ENCODE measurements at regions of chr10 and their contacts with region 1.

Region 1: GRCh38 chr10:68301790-68302502 is 29.9 kb upstream of the HNRNPH3 start:
- DNase-seq: no peak
- ATAC-seq: peak in 3 of 4 donors; percentile 65 to 80 (median 72)
- H3K4me3 ChIP-seq: no peak overlapping the region
- H3K27ac ChIP-seq: no peak overlapping the region
- H3K4me1 ChIP-seq: peaks cover 0 to 6% (median 1%) of the 10 kb centered on the region in 12 donors
- H3K27me3 ChIP-seq: no peaks in the 10 kb centered on the region
- CTCF ChIP-seq: peak; percentile 46 to 69 (median 53)
- POLR2A ChIP-seq: no peak

Region 2: GRCh38 chr10:67849331-67850011 is 452.5 kb before region 1 on chr10:
- intact Hi-C with region 1: loop called in 4 of 10 experiments (anchors 10 kb)
- DNase-seq: peak; percentile 95 to 98 (median 96)
- ATAC-seq: peak; percentile 98 to 99 (median 99)
- H3K4me3 ChIP-seq: peak overlapping the region; percentile 55 to 99 (median 80)
- H3K27ac ChIP-seq: peak overlapping the region; percentile 89 to 99 (median 95)
- H3K4me1 ChIP-seq: peaks cover 0 to 8% (median 5%) of the 10 kb centered on the region in 12 donors
- H3K27me3 ChIP-seq: no peaks in the 10 kb centered on the region
- CTCF ChIP-seq: peak in 1 of 12 donors; percentile 34
- POLR2A ChIP-seq: peak in 1 of 2 donors; percentile 53

Region 3: DNA sequence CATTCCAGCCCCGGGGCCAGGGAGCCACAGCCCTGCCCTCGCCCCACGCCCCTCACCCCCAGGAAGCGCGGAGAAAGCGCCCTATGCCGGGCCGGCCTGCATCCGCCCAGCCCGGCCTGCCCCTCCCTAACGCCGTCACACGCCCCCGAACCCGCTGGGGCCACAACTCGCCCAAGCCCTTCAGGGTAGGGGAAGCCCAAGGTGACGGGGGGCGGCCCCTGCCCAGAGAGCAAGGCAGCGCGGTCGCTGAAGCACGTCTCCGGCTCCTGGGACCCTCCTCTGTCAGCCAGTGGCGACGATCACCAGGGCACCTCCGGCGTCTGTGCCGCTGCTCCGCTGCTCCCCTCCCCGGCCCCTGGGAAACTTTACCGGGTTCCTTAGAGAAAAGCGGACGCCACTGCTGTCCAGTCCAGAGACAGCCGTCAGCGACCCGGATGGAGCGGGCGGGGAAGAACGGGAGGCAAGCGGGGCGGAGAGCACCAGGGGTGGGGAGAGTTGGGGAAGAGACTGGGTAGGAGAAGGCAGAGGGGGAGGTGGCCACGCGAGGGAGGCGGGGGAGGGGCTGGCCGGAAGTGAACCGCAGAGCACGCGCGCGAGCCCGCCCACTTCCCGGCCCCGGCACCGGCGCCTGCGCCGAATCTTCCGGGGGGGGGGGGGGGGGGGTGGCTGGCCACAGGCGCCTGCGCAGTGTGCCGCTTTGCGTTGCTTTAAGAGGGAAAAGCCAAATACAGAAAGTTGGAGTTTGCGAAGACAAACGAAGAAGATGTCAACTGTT is 227.0 kb before region 1 on chr10 and contains the start of gene HERC4:
- intact Hi-C with region 1: loop called in 7 of 10 experiments (anchors 5 to 10 kb)
- DNase-seq: peak; percentile 96 to 97 (median 97)
- ATAC-seq: peak; percentile 99
- H3K4me3 ChIP-seq: peak within 1 kb of the TSS; percentile 77 to 97 (median 92)
- H3K27ac ChIP-seq: peak within 1 kb of the TSS; percentile 86 to 100 (median 98)
- H3K4me1 ChIP-seq: peaks cover 8 to 39% (median 33%) of the 10 kb centered on the region in 12 donors
- H3K27me3 ChIP-seq: no peaks in the 10 kb centered on the region
- CTCF ChIP-seq: no peak
- POLR2A ChIP-seq: peak in 1 of 2 donors; percentile 68
- total RNA-seq, gene HERC4: 16.6 to 39.4 (median 30.6) TPM

Region 4: GRCh38 chr10:68212721-68213352 is 89.1 kb before region 1 on chr10:
- intact Hi-C with region 1: loop called (anchors 2 to 10 kb)
- DNase-seq: no peak
- ATAC-seq: no peak
- H3K4me3 ChIP-seq: no peak overlapping the region
- H3K27ac ChIP-seq: no peak overlapping the region
- H3K4me1 ChIP-seq: no peaks in the 10 kb centered on the region
- H3K27me3 ChIP-seq: no peaks in the 10 kb centered on the region
- CTCF ChIP-seq: peak; percentile 34 to 64 (median 50)
- POLR2A ChIP-seq: no peak

Region 5: DNA sequence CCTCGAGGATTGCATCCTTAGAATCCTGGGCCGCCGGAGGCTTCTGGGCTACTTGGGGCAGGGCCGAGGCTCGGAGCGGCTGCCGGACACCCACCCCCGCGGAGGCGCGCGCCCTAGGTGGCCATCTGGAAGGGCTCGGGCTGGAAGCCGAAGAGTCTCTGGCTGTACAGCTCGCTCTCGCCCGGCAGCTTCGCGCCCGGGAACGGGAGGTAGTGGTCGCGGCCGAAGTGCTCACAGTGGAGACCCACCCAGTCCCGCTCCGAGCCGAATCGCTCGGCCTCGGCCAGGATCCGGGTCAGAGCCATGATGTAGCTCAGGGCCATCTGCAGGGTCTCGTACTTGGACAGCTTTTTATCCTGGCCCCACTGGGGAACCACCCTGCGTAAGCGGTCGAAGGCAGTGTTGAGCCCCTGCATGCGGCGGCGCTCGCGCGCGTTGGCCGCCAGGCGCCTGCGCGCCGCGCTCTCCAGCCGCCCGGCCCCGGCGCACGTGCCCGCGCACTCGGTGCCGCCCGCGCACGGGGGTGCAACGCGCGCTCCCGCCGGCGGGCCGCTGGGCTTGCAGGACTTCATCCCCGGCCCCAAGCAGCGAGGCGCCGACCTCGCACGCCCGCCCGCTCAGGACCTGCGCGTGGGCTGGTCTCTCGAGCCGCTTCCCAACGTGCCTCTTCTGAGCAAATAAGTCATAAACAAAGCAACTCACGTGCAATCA is 70.7 kb before region 1 on chr10:
- intact Hi-C with region 1: loop called in 2 of 10 experiments (anchors 5 kb)
- DNase-seq: peak; percentile 56 to 79 (median 65)
- ATAC-seq: peak; percentile 77 to 98 (median 96)
- H3K4me3 ChIP-seq: peak overlapping the region; percentile 25 to 77 (median 66)
- H3K27ac ChIP-seq: peak overlapping the region in 11 of 12 donors; percentile 17 to 83 (median 65)
- H3K4me1 ChIP-seq: peaks cover 0 to 13% (median 7%) of the 10 kb centered on the region in 12 donors
- H3K27me3 ChIP-seq: peaks cover 0 to 27% (median 0%) of the 10 kb centered on the region in 9 donors
- CTCF ChIP-seq: peak in 7 of 12 donors; percentile 8 to 41 (median 30)
- POLR2A ChIP-seq: no peak

Measured in heart left ventricle (tissue), 16 donors.